H1 (cell line): ENCODE measurements at regions of chr5 and their contacts with region 1.

Region 1: GRCh38 chr5:1130218-1130946 is 18.5 kb upstream of the SLC12A7 start:
- DNase-seq: no peak
- H3K4me3 ChIP-seq: no peak overlapping the region
- H3K27ac ChIP-seq: no peak overlapping the region
- H3K4me1 ChIP-seq: peaks cover 0 to 9% (median under 1%) of the 10 kb centered on the region in 4 experiments; a peak in 2 of 7 replicates
- H3K27me3 ChIP-seq: no peaks in the 10 kb centered on the region
- CTCF ChIP-seq: no peak
- EP300 ChIP-seq: no peak
- POLR2A ChIP-seq: no peak
- RAD21 ChIP-seq: no peak

Region 2: DNA sequence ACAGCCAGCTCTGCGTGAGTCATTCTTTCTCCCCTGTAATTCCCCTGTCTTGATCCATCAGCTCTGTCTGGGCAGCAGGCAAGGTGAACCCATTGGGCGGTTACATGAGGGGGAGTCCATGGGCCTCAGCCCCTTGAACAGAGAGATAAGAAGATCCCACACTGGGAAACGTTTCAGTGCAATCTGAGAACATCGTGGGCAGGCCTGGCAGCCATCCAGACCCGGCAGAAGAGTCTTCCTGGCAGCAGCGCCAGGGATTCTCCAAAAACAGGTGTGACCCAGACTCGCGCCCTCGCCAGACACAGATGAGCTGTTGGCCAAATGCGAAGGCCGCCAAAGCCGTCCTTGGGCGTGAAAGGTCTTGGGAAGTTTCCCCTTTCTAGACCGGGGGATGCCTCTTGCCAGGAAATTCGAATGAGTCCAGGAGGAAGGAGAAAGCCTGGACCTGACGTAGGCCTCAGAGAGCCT is 12.1 kb before region 1 on chr5:
- CTCF ChIA-PET with region 1: interaction called, 13 read pairs
- POLR2A ChIA-PET with region 1: interaction called, 22 read pairs
- DNase-seq: no peak
- H3K4me3 ChIP-seq: no peak overlapping the region
- H3K27ac ChIP-seq: no peak overlapping the region
- H3K4me1 ChIP-seq: peaks cover 0 to 8% (median 5%) of the 10 kb centered on the region in 4 experiments; a peak in 4 of 7 replicates
- H3K27me3 ChIP-seq: no peaks in the 10 kb centered on the region
- CTCF ChIP-seq: no peak
- EP300 ChIP-seq: no peak
- POLR2A ChIP-seq: no peak
- RAD21 ChIP-seq: no peak